ENCODE measurements at regions of chr11 and their contacts with region 1.

Region 1: DNA sequence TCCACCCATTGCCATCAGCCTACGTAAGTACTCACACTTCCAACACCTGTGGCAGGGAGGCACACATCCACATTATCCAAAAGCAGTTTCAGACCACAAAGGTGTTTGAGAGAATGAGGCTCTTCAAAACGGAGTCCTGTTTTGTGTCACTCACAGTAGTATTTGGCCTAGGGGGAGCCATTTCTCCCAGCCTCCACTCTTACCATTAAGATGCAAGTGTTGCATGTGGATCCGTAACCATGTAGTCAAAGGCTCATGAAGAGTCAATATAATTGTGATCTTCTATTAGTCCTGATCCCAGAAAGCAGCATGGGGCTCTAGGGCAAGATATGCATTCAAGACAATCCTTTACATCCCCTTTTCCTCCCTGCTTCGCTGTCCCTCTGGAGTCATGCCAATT is 41.5 kb downstream of the IL10RA start:
- DNase-seq: no peak
- ATAC-seq: no peak
- H3K4me3 ChIP-seq: no peak overlapping the region
- H3K4me3 Mint-ChIP-seq: no peak overlapping the region
- H3K27ac ChIP-seq: no peak overlapping the region
- H3K27ac Mint-ChIP-seq: no peak overlapping the region
- H3K4me1 ChIP-seq: peaks cover 0 to 3% of the 10 kb centered on the region in 2 donors
- H3K4me1 Mint-ChIP-seq: peaks cover 7 to 29% (median 21%) of the 10 kb centered on the region in 7 donors
- H3K27me3 ChIP-seq: no peaks in the 10 kb centered on the region
- H3K27me3 Mint-ChIP-seq: peaks cover 0 to 4% (median 0%) of the 10 kb centered on the region in 5 donors

Region 2: DNA sequence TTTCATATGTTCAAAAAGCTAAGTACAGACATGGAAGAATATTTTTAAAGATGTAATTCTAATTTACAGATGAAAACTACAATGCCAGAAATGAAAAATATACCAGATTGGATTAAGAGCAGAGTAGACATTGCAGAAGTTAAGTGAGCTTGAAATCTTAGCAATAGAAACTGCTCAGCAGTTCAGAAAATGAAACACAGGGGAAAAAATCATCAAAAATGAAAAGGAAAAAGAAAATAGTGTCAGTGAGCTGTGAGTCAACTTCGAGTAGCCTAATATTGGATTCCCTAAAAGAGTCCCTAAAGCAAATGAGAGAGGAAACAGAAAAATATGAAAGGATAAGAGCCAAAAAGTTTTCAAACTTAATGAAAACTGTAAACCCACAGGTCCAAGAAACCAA is 67.3 kb before region 1 on chr11:
- CTCF ChIA-PET with region 1: no interaction called
- POLR2A ChIA-PET with region 1: no interaction called
- intact Hi-C with region 1: no loop called
- DNase-seq: no peak
- ATAC-seq: no peak
- H3K4me3 ChIP-seq: no peak overlapping the region
- H3K4me3 Mint-ChIP-seq: peak overlapping the region in 1 of 10 donors; percentile 43
- H3K27ac ChIP-seq: no peak overlapping the region
- H3K27ac Mint-ChIP-seq: peak overlapping the region in 4 of 9 donors; percentile 17 to 85 (median 60)
- H3K4me1 ChIP-seq: peaks cover 6 to 9% of the 10 kb centered on the region in 2 donors
- H3K4me1 Mint-ChIP-seq: peaks cover 29 to 68% (median 63%) of the 10 kb centered on the region in 7 donors
- H3K27me3 ChIP-seq: no peaks in the 10 kb centered on the region
- H3K27me3 Mint-ChIP-seq: no peaks in the 10 kb centered on the region

Region 3: GRCh38 chr11:118010738-118011461 is 16.8 kb before region 1 on chr11:
- CTCF ChIA-PET with region 1: interaction called, 4 read pairs
- POLR2A ChIA-PET with region 1: interaction called, 3 read pairs
- intact Hi-C with region 1: loop called in 1 of 2 experiments (anchors 2 kb)
- DNase-seq: no peak
- ATAC-seq: peak; percentile 76
- H3K4me3 ChIP-seq: no peak overlapping the region
- H3K4me3 Mint-ChIP-seq: peak overlapping the region in 1 of 10 donors; percentile 56
- H3K27ac ChIP-seq: no peak overlapping the region
- H3K27ac Mint-ChIP-seq: peak overlapping the region in 4 of 9 donors; percentile 9 to 92 (median 52)
- H3K4me1 ChIP-seq: peaks cover 72 to 98% of the 10 kb centered on the region in 2 donors
- H3K4me1 Mint-ChIP-seq: peaks cover 82 to 93% (median 85%) of the 10 kb centered on the region in 7 donors
- H3K27me3 ChIP-seq: no peaks in the 10 kb centered on the region
- H3K27me3 Mint-ChIP-seq: no peaks in the 10 kb centered on the region

Region 4: DNA sequence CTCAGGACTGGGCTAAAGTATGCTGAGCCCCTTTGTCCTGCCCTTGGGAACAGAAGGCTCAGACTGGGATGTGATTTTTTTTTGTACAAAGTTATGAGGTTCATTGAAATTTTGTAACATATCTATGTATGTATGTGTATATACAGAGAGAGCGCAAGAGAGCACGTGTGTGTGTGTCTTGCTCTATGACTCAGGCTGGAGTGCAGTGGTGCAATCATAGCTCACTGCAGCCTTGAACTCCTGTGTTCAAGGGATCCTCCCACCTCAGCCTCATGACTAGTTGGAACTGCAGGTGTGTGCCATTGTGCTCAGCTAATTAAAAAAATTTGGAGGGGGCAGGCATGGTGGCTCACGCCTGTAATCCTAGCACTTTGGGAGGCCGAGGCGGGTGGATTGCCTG is 509.0 kb after region 1 on chr11:
- CTCF ChIA-PET with region 1: no interaction called
- POLR2A ChIA-PET with region 1: no interaction called
- intact Hi-C with region 1: no loop called
- DNase-seq: no peak
- ATAC-seq: no peak
- H3K4me3 ChIP-seq: no peak overlapping the region
- H3K4me3 Mint-ChIP-seq: no peak overlapping the region
- H3K27ac ChIP-seq: no peak overlapping the region
- H3K27ac Mint-ChIP-seq: no peak overlapping the region
- H3K4me1 ChIP-seq: peaks cover 0 to 3% of the 10 kb centered on the region in 2 donors
- H3K4me1 Mint-ChIP-seq: peaks cover 0 to 8% (median 7%) of the 10 kb centered on the region in 7 donors
- H3K27me3 ChIP-seq: no peaks in the 10 kb centered on the region
- H3K27me3 Mint-ChIP-seq: no peaks in the 10 kb centered on the region